CD4-positive, alpha-beta T cell (primary cell): ENCODE measurements at regions of chr19 and their contacts with region 1.

Region 1: DNA sequence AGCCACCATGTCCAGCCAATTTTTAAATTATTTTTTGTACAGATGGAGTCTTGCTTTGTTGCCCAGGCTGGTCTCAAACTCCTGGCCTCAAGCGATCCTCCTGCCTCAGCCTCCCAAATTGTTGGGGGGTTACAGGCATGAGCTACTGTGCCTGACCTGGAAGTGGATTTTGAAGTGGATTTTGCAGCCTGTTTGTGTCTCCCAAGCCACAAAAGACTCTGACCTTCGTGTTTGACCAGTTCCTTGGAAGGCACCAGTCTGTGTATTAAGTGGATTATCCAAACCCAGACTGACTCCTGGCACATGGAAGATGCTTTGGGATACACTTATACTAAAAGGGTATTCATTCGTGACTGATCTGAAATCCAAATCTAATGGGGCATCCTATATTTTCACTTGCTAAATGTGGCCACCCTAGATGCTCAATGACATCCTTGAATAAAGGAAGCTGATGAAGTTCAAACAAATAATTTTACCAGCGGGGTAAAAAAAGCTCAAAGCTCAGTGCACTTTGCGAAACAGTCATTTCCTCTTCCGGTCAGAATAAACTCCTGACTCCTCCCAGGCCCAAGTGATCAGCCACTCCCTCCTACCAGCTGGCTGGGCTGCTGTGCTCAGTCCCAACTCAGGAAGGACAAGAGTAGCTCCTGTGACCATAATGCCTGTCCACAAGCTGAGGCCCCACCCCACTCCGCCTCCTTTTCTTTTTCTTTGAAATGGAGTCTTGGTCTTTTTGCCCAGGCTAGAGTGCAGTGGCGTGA is 32.6 kb upstream of the GATAD2A start:
- DNase-seq: peak in 6 of 14 experiments; percentile 18 to 86 (median 62)
- ATAC-seq: peak; percentile 83
- H3K4me3 ChIP-seq: no peak overlapping the region
- H3K4me3 Mint-ChIP-seq: peak overlapping the region; percentile 43
- H3K27ac ChIP-seq: peak overlapping the region in 1 of 2 donors; percentile 81
- H3K27ac Mint-ChIP-seq: peak overlapping the region; percentile 85
- H3K4me1 ChIP-seq: peaks cover 17% of the 10 kb centered on the region
- H3K4me1 Mint-ChIP-seq: peaks cover 12% of the 10 kb centered on the region
- H3K27me3 ChIP-seq: no peaks in the 10 kb centered on the region
- H3K27me3 Mint-ChIP-seq: no peaks in the 10 kb centered on the region
- CTCF ChIP-seq: no peak

Region 2: GRCh38 chr19:19250196-19250801 is 122.5 kb before region 1 on chr19:
- CTCF ChIA-PET with region 1: no interaction called
- POLR2A ChIA-PET with region 1: no interaction called
- intact Hi-C with region 1: no loop called
- DNase-seq: no peak
- ATAC-seq: no peak
- H3K4me3 ChIP-seq: no peak overlapping the region
- H3K4me3 Mint-ChIP-seq: no peak overlapping the region
- H3K27ac ChIP-seq: no peak overlapping the region
- H3K27ac Mint-ChIP-seq: no peak overlapping the region
- H3K4me1 ChIP-seq: no peaks in the 10 kb centered on the region
- H3K4me1 Mint-ChIP-seq: no peaks in the 10 kb centered on the region
- H3K27me3 ChIP-seq: peaks cover 4 to 13% of the 10 kb centered on the region in 2 experiments
- H3K27me3 Mint-ChIP-seq: peaks cover 48% of the 10 kb centered on the region
- CTCF ChIP-seq: no peak

Region 3: DNA sequence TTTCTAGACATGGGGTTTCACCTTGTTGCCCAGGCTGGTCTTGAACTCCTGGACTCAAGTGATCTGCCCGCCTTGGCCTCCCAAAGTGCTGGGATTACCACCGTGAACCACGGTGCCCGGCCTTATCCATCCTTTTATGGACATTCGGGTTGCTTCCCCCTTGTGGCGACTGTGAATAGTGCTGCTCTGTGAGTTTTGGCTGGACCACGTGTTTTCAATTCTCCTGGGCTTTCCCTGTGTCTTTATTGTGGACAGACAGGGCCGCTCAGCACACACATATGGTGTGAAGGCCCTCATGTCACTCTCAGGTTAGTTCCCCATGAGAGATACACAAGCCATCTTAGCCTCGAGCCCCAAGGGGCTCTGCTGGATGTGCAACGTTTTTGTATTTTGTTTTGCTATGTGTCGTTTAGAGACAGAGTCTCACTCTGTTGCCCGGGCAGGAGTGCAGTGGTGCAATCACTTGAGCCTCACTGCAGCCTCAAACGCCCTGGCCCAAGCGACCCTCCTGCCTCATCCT is 11.7 kb before region 1 on chr19:
- CTCF ChIA-PET with region 1: interaction called, 4 read pairs
- POLR2A ChIA-PET with region 1: interaction called, 34 read pairs
- intact Hi-C with region 1: no loop called
- DNase-seq: peak; percentile 31 to 88 (median 60)
- ATAC-seq: peak; percentile 57
- H3K4me3 ChIP-seq: no peak overlapping the region
- H3K4me3 Mint-ChIP-seq: peak overlapping the region; percentile 57
- H3K27ac ChIP-seq: no peak overlapping the region
- H3K27ac Mint-ChIP-seq: peak overlapping the region; percentile 75
- H3K4me1 ChIP-seq: peaks cover 45% of the 10 kb centered on the region
- H3K4me1 Mint-ChIP-seq: peaks cover 42% of the 10 kb centered on the region
- H3K27me3 ChIP-seq: no peaks in the 10 kb centered on the region
- H3K27me3 Mint-ChIP-seq: no peaks in the 10 kb centered on the region
- CTCF ChIP-seq: peak; percentile 79